HAP-1 (cell line): ENCODE measurements at regions of chr16 and their contacts with region 1.

Region 1: GRCh38 chr16:7218936-7219335 is 113.7 kb upstream of the RBFOX1 start:
- DNase-seq: no peak
- H3K4me3 ChIP-seq: no peak overlapping the region
- H3K4me1 ChIP-seq: no peaks in the 10 kb centered on the region
- H3K27me3 ChIP-seq: no peaks in the 10 kb centered on the region

Region 2: GRCh38 chr16:7313170-7313569 is 94.2 kb after region 1 on chr16:
- in situ Hi-C with region 1: loop called (anchors 25 kb)
- DNase-seq: no peak
- H3K4me3 ChIP-seq: no peak overlapping the region
- H3K4me1 ChIP-seq: no peaks in the 10 kb centered on the region
- H3K27me3 ChIP-seq: no peaks in the 10 kb centered on the region